ENCODE measurements at regions of chr1 and their contacts with region 1.

Region 1: GRCh38 chr1:239719642-239720258 is 333.4 kb downstream of the CHRM3 start:
- DNase-seq: peak; percentile 74
- H3K4me3 Mint-ChIP-seq: peak overlapping the region; percentile 91
- H3K27ac Mint-ChIP-seq: peak overlapping the region; percentile 97
- H3K4me1 Mint-ChIP-seq: peaks cover 41% of the 10 kb centered on the region
- H3K27me3 Mint-ChIP-seq: no peaks in the 10 kb centered on the region

Region 2: DNA sequence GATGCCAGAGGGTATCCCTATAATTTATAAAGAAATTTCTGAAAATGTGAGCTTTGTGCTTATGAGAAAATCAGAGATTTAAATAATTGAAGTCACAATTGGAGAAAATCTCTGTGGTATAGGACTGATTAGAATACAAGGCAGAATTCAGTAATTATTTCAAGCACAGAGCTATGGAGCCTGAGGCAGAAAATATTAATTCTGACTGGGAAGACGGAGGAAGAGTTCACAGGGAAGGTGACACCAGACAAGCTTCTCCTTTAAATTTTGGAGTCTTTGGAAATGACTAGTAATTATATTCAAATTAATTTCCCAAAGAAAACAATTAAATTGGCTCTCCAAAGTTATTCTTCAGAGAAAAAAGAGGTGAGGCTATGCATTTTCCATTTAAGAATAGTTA is 211.9 kb before region 1 on chr1:
- CTCF ChIA-PET with region 1: no interaction called
- intact Hi-C with region 1: loop called (anchors 5 kb)
- DNase-seq: no peak
- H3K4me3 Mint-ChIP-seq: no peak overlapping the region
- H3K27ac Mint-ChIP-seq: no peak overlapping the region
- H3K4me1 Mint-ChIP-seq: peaks cover under 1% of the 10 kb centered on the region
- H3K27me3 Mint-ChIP-seq: no peaks in the 10 kb centered on the region

Region 3: GRCh38 chr1:239547987-239548386 is 171.8 kb before region 1 on chr1:
- CTCF ChIA-PET with region 1: no interaction called
- intact Hi-C with region 1: loop called (anchors 2 kb)
- DNase-seq: no peak
- H3K4me3 Mint-ChIP-seq: no peak overlapping the region
- H3K27ac Mint-ChIP-seq: no peak overlapping the region
- H3K4me1 Mint-ChIP-seq: peaks cover 17% of the 10 kb centered on the region
- H3K27me3 Mint-ChIP-seq: no peaks in the 10 kb centered on the region

Region 4: GRCh38 chr1:239587066-239587465 is 132.7 kb before region 1 on chr1:
- CTCF ChIA-PET with region 1: interaction called, 4 read pairs
- intact Hi-C with region 1: loop called (anchors 1 kb)
- DNase-seq: peak; percentile 36
- H3K4me3 Mint-ChIP-seq: no peak overlapping the region
- H3K27ac Mint-ChIP-seq: no peak overlapping the region
- H3K4me1 Mint-ChIP-seq: peaks cover 7% of the 10 kb centered on the region
- H3K27me3 Mint-ChIP-seq: no peaks in the 10 kb centered on the region

Region 5: DNA sequence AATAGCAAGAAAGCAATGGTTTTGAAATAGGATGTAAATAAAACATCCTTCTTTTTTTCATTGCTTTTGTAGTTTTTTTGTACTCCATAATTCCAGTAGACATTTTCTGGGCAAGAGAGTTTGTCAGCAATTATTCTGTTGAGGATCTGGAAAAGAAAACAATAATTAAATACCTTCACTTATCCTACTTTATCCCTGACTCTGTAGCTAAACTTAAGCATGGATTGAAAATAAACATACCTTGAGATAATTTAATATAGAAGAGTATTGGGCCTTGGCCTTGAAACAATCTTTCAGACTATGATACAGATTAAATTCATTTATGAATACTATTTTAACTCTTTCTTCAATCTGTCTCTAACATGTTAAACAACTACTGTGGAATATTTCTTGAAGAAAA is 12.1 kb before region 1 on chr1:
- CTCF ChIA-PET with region 1: interaction called, 13 read pairs
- intact Hi-C with region 1: loop called (anchors 1 kb)
- DNase-seq: no peak
- H3K4me3 Mint-ChIP-seq: no peak overlapping the region
- H3K27ac Mint-ChIP-seq: no peak overlapping the region
- H3K4me1 Mint-ChIP-seq: peaks cover 50% of the 10 kb centered on the region
- H3K27me3 Mint-ChIP-seq: no peaks in the 10 kb centered on the region

Region 6: GRCh38 chr1:239792157-239792556 is 72.4 kb after region 1 on chr1:
- CTCF ChIA-PET with region 1: no interaction called
- intact Hi-C with region 1: loop called (anchors 1 kb)
- DNase-seq: peak; percentile 46
- H3K4me3 Mint-ChIP-seq: no peak overlapping the region
- H3K27ac Mint-ChIP-seq: no peak overlapping the region
- H3K4me1 Mint-ChIP-seq: peaks cover 11% of the 10 kb centered on the region
- H3K27me3 Mint-ChIP-seq: no peaks in the 10 kb centered on the region